ENCODE measurements at regions of chrX and their contacts with region 1.

Region 1: DNA sequence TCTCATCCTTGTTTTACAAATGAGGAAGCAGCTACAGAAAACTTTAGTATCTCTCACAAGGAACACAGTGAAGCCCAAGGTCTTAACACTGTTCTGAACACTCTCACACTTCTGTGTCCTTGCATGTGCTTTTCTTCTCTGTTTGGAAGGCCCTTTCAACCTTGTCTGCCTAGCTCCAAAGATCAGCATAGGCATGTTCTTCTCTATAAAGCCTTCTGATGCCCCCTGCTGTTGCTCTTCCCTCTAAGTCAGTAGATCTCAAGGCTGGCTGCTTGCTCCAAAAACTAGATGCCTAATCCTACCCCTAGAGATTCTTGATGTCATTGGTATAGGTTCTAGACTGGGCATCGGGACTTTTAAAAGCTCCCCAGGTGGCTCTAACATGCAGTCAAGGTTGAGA is 5.9 kb downstream of the APOO start:
- DNase-seq: peak; percentile 61
- ATAC-seq: peak; percentile 86
- H3K4me3 Mint-ChIP-seq: no peak overlapping the region
- H3K27ac Mint-ChIP-seq: no peak overlapping the region
- H3K4me1 Mint-ChIP-seq: peaks cover 30% of the 10 kb centered on the region
- H3K27me3 Mint-ChIP-seq: no peaks in the 10 kb centered on the region

Region 2: DNA sequence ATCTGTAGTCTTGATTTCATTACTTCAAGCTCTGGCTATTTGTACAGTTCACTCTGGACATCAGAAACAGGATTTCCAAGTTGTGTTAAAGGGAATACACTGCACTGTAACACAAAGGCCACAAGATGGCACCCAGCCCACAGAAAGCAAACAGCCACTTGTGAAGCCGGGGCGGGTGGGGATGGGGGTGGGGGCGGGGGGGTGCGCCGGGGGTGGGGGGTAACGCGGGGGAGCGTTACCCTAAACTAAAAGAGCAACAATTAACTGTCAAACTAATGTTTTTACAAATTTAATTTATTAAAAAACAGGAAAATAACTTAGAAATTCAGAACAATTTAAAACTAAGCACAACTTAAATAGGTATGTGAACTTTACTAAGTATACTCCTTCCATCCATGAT is 207.2 kb before region 1 on chrX:
- CTCF ChIA-PET with region 1: interaction called, 35 read pairs
- DNase-seq: peak; percentile 53
- ATAC-seq: peak; percentile 58
- H3K4me3 Mint-ChIP-seq: no peak overlapping the region
- H3K27ac Mint-ChIP-seq: no peak overlapping the region
- H3K4me1 Mint-ChIP-seq: peaks cover 3% of the 10 kb centered on the region
- H3K27me3 Mint-ChIP-seq: no peaks in the 10 kb centered on the region

Region 3: DNA sequence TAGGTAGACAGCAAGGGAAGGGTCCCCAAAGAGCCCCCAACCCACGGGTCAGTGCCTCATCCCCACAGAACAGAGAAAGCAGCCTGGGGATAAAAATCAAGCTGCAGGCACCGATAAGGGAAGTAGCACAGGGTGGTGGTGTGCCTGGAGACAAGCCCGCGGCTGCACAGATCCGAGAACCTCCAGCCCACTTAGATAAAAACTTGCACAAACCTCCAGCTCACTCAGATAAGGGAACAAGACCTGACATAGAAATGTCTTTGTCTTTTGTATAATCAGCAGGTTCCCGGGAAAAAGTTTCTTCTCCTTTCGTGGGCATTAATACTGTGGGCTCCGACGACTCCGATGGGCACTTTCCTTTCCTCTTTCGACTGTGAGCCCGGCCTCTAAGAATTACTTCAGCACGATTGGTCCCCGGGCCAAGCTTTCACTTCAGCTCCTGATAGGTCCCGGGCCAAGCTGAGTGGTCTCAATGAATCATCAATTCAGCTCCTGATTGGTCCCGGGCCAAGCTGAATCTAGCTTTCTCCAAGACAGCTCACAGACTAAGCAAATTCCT is 202.1 kb before region 1 on chrX:
- CTCF ChIA-PET with region 1: interaction called, 35 read pairs
- DNase-seq: peak; percentile 41
- ATAC-seq: peak; percentile 66
- H3K4me3 Mint-ChIP-seq: peak overlapping the region; percentile 26
- H3K27ac Mint-ChIP-seq: peak overlapping the region; percentile 40
- H3K4me1 Mint-ChIP-seq: peaks cover 5% of the 10 kb centered on the region
- H3K27me3 Mint-ChIP-seq: no peaks in the 10 kb centered on the region

Region 4: GRCh38 chrX:23756157-23756559 is 145.6 kb before region 1 on chrX:
- CTCF ChIA-PET with region 1: interaction called, 11 read pairs
- DNase-seq: peak; percentile 82
- ATAC-seq: peak; percentile 84
- H3K4me3 Mint-ChIP-seq: no peak overlapping the region
- H3K27ac Mint-ChIP-seq: peak overlapping the region; percentile 72
- H3K4me1 Mint-ChIP-seq: peaks cover 5% of the 10 kb centered on the region
- H3K27me3 Mint-ChIP-seq: no peaks in the 10 kb centered on the region

Region 5: GRCh38 chrX:23782863-23783568 is 118.8 kb before region 1 on chrX and contains the start of gene SAT1:
- CTCF ChIA-PET with region 1: interaction called, 36 read pairs
- DNase-seq: peak; percentile 96
- ATAC-seq: peak; percentile 86
- H3K4me3 Mint-ChIP-seq: peak within 1 kb of the TSS; percentile 92
- H3K27ac Mint-ChIP-seq: peak within 1 kb of the TSS; percentile 97
- H3K4me1 Mint-ChIP-seq: peaks cover 33% of the 10 kb centered on the region
- H3K27me3 Mint-ChIP-seq: no peaks in the 10 kb centered on the region
- total RNA-seq, gene SAT1: 96.1 to 204 TPM

Region 6: DNA sequence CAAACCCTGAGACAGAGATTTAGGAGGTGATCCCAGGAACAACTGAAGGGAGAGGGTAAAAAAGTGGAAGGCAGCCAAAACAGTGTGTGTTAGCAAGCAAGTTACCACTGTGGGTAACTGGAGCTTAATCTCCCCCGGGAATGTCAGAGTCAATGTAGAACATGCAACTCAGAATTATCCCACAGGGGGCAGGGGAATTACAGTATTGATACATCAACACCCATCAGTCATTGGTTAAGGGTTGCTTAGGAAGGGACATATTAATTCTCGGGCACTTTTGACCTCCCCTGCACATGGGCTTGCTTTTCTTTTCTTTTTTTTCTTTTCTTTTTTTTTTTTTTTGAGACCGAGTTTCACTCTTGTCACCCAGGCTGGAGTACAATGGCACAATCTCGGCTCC is 35.3 kb after region 1 on chrX:
- CTCF ChIA-PET with region 1: no interaction called
- DNase-seq: no peak
- ATAC-seq: no peak
- H3K4me3 Mint-ChIP-seq: no peak overlapping the region
- H3K27ac Mint-ChIP-seq: no peak overlapping the region
- H3K4me1 Mint-ChIP-seq: peaks cover 2% of the 10 kb centered on the region
- H3K27me3 Mint-ChIP-seq: no peaks in the 10 kb centered on the region

Region 7: GRCh38 chrX:24054182-24055042 is 152.6 kb after region 1 on chrX and contains the start of gene EIF2S3:
- CTCF ChIA-PET with region 1: interaction called, 33 read pairs
- DNase-seq: peak; percentile 90
- ATAC-seq: peak; percentile 87
- H3K4me3 Mint-ChIP-seq: no peak within 1 kb of the TSS
- H3K27ac Mint-ChIP-seq: no peak within 1 kb of the TSS
- H3K4me1 Mint-ChIP-seq: peaks cover 15% of the 10 kb centered on the region
- H3K27me3 Mint-ChIP-seq: no peaks in the 10 kb centered on the region
- total RNA-seq, gene EIF2S3: 179 to 204 TPM

Measured in activated CD8-positive, alpha-beta memory T cell treated with anti-CD3 and anti-CD28 coated beads, Interleukin-2, amount 10 ng/mL, durations not matched to agents 7 days and 5 days (primary cell).